ENCODE measurements at regions of chr19 and their contacts with region 1.

Region 1: GRCh38 chr19:15227256-15227655 is 5.0 kb downstream of the EPHX3 start:
- DNase-seq: no peak
- H3K4me3 ChIP-seq: no peak overlapping the region
- H3K27ac ChIP-seq: no peak overlapping the region
- H3K4me1 ChIP-seq: peaks cover 7% of the 10 kb centered on the region
- H3K27me3 ChIP-seq: no peaks in the 10 kb centered on the region
- CTCF ChIP-seq: no peak

Region 2: GRCh38 chr19:15213715-15214381 is 13.4 kb before region 1 on chr19:
- CTCF ChIA-PET with region 1: interaction called, 12 read pairs
- POLR2A ChIA-PET with region 1: no interaction called
- intact Hi-C with region 1: no loop called
- DNase-seq: no peak
- H3K4me3 ChIP-seq: no peak overlapping the region
- H3K27ac ChIP-seq: no peak overlapping the region
- H3K4me1 ChIP-seq: peaks cover 52% of the 10 kb centered on the region
- H3K27me3 ChIP-seq: no peaks in the 10 kb centered on the region
- CTCF ChIP-seq: no peak

Measured in PC-9 (cell line).